ENCODE measurements at regions of chr13 and their contacts with region 1.

Region 1: DNA sequence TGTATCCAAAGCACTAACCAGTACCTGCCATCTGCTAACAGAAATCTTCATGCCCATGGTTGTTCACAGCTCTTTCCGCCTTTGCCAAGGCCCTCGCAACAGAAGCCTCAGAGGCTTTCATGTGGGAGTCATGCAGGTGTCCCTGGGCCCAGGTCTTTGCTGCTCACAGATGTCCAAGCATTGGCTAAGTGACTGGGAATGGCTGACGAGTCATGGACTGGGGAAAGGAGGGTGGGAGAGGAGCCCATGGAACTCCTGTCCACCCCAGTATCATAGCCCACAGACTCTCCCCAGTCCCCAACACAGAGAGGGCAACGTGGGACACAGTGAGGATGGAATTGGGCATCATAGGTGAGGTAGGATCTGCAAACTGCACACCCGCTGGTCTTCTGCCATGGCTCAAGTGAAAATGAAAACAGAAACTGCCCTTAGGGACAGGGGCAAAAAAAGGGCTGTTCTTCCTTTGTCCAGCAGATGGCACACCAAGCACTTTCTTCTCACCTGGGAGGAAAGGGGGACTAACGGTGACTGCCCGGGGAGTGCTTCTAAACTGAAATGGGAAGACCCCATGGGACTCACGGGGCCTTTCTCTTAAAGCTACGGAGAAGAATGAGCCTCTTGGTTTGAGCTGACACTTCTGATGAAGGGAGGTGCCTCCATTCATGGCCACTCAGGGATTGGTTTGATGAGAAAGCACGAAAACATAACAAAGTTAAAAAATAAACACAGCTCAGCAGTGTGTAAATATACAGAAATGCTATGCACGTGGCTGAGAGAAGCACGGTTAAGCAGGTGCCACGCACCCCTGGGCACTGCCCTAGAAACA is 11.1 kb upstream of the DHRS12 start:
- DNase-seq: peak; percentile 81
- CTCF ChIP-seq: peak; percentile 80

Region 2: GRCh38 chr13:51125498-51126226 is 689.4 kb before region 1 on chr13:
- CTCF ChIA-PET with region 1: interaction called, 18 read pairs
- POLR2A ChIA-PET with region 1: no interaction called
- DNase-seq: peak; percentile 54
- CTCF ChIP-seq: peak; percentile 78

Region 3: GRCh38 chr13:51804295-51805172 is 10.5 kb before region 1 on chr13:
- CTCF ChIA-PET with region 1: interaction called, 19 read pairs
- POLR2A ChIA-PET with region 1: no interaction called
- DNase-seq: no peak
- CTCF ChIP-seq: no peak

Region 4: GRCh38 chr13:51832471-51833152 is 17.6 kb after region 1 on chr13:
- CTCF ChIA-PET with region 1: interaction called, 48 read pairs
- POLR2A ChIA-PET with region 1: no interaction called
- DNase-seq: peak; percentile 56
- CTCF ChIP-seq: peak; percentile 38

Region 5: GRCh38 chr13:51844862-51845573 is 30.0 kb after region 1 on chr13 and contains the start of gene TMEM272:
- CTCF ChIA-PET with region 1: interaction called, 25 read pairs
- POLR2A ChIA-PET with region 1: no interaction called
- DNase-seq: peak; percentile 77
- CTCF ChIP-seq: peak; percentile 77

Region 6: GRCh38 chr13:52026246-52026626 is 211.2 kb after region 1 on chr13:
- CTCF ChIA-PET with region 1: no interaction called
- POLR2A ChIA-PET with region 1: no interaction called
- DNase-seq: no peak
- CTCF ChIP-seq: no peak

Region 7: DNA sequence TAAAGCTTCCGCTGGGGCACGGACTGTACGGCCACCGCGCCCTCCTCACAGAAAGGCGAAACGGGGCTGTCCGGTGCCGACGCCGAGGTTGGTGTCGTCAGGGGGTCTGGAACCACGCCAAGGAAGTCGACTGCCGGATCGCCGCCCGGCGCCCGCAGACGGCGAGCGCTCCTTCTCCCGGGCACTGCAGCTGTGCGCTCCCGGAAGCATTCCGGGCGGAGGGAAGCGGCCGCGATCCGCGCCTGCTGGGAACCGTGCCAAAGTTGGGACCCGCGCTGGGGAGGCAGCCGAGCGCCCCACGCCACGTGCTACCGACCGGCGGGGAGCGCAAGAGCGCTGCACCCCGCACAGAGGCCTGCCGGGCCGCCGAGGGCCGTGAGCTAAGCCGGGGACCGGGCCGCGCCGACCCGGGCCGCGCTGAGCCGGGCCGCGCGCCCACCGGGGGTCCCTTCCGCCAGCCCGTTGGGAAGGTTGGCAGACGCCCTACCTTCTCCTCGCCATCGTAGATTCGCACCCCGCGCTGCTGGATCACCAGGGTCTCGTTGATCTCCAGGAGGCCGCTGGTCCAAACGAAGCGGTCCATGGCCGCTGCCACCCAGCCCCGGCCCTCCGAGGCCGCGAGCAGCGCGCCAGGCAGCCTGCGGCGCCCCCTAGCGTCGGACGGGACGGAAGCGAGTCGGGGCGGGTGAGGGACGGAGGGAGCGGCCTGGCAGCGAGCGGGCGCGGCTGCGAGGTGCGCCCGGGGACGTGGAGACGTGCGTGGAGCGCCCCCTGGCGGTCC is 635.2 kb after region 1 on chr13 and contains the start of gene VPS36:
- CTCF ChIA-PET with region 1: interaction called, 28 read pairs
- POLR2A ChIA-PET with region 1: no interaction called
- DNase-seq: peak; percentile 91
- CTCF ChIP-seq: peak; percentile 96

Measured in GM10248 (cell line).